ENCODE measurements at regions of chr2 and their contacts with region 1.

Region 1: DNA sequence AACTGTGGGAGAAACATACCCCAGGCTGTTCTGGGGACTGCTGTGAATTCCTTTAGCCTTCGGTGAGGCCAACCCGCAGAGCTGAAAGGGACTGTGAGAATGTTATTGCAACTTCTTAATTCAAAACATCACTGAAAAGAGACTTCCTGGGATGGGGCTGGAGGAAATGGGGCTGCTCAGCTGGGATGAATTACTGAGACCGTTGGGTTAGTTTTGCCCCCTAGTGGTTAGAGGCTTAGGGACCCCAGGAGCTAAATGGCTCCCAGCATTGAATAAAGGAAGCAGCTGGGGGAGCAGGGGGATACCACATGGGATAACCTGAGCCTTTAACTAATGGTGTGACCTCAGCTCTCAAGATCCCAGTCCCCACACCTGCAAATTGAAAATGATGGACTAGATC is 941.1 kb upstream of the FANCL start:
- DNase-seq: peak; percentile 22
- ATAC-seq: peak; percentile 96
- H3K4me3 ChIP-seq: no peak overlapping the region
- H3K27ac ChIP-seq: no peak overlapping the region
- H3K4me1 ChIP-seq: no peaks in the 10 kb centered on the region
- H3K27me3 ChIP-seq: no peaks in the 10 kb centered on the region
- CTCF ChIP-seq: peak; percentile 66
- EP300 ChIP-seq: no peak
- POLR2A ChIP-seq: no peak
- RAD21 ChIP-seq: no peak

Region 2: GRCh38 chr2:57720728-57721627 is 1461.3 kb before region 1 on chr2:
- CTCF ChIA-PET with region 1: no interaction called
- POLR2A ChIA-PET with region 1: no interaction called
- in situ Hi-C with region 1: no loop called
- intact Hi-C with region 1: loop called (anchors 2 kb)
- DNase-seq: peak; percentile 56
- ATAC-seq: peak; percentile 100
- H3K4me3 ChIP-seq: peak overlapping the region in 1 of 3 experiments; percentile 19; a peak in 1 of 6 replicates
- H3K27ac ChIP-seq: no peak overlapping the region
- H3K4me1 ChIP-seq: no peaks in the 10 kb centered on the region
- H3K27me3 ChIP-seq: no peaks in the 10 kb centered on the region
- CTCF ChIP-seq: peak; percentile 85
- EP300 ChIP-seq: no peak
- POLR2A ChIP-seq: no peak
- RAD21 ChIP-seq: peak; percentile 53

Region 3: GRCh38 chr2:58762176-58762781 is 420.0 kb before region 1 on chr2:
- CTCF ChIA-PET with region 1: no interaction called
- POLR2A ChIA-PET with region 1: no interaction called
- in situ Hi-C with region 1: loop called (anchors 10 kb)
- intact Hi-C with region 1: loop called (anchors 1 kb)
- DNase-seq: peak; percentile 35
- ATAC-seq: peak; percentile 93
- H3K4me3 ChIP-seq: no peak overlapping the region
- H3K27ac ChIP-seq: no peak overlapping the region
- H3K4me1 ChIP-seq: no peaks in the 10 kb centered on the region
- H3K27me3 ChIP-seq: no peaks in the 10 kb centered on the region
- CTCF ChIP-seq: peak; percentile 74
- EP300 ChIP-seq: no peak
- POLR2A ChIP-seq: no peak
- RAD21 ChIP-seq: peak; percentile 52; the same call in 1 of the 2 replicates

Region 4: DNA sequence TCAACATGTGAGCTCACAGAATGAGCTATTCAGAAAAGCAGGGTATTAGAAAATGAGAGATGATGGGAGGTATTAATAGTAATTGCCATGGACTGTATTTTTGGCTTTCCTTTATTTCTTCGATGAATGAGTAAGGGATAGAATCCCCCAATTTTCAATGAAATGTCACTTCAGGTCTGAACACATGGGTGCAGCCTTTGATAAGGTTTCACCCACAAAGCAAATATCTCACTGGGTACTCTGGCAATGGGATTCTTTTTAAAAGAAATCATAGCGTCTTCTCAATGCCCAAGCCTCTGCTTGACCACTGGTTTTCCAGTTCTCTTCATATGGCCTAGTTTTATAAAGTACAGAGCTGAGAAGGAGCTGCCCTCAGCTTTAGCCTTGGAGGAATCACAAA is 330.7 kb before region 1 on chr2:
- CTCF ChIA-PET with region 1: no interaction called
- POLR2A ChIA-PET with region 1: no interaction called
- in situ Hi-C with region 1: no loop called
- intact Hi-C with region 1: loop called (anchors 2 kb)
- DNase-seq: no peak
- ATAC-seq: no peak
- H3K4me3 ChIP-seq: no peak overlapping the region
- H3K27ac ChIP-seq: no peak overlapping the region
- H3K4me1 ChIP-seq: no peaks in the 10 kb centered on the region
- H3K27me3 ChIP-seq: no peaks in the 10 kb centered on the region
- CTCF ChIP-seq: peak; percentile 13; the same call in 1 of the 2 replicates
- EP300 ChIP-seq: no peak
- POLR2A ChIP-seq: no peak
- RAD21 ChIP-seq: no peak

Region 5: GRCh38 chr2:59112258-59112657 is 70.0 kb before region 1 on chr2:
- CTCF ChIA-PET with region 1: no interaction called
- POLR2A ChIA-PET with region 1: no interaction called
- in situ Hi-C with region 1: no loop called
- intact Hi-C with region 1: no loop called
- DNase-seq: no peak
- ATAC-seq: no peak
- H3K4me3 ChIP-seq: no peak overlapping the region
- H3K27ac ChIP-seq: no peak overlapping the region
- H3K4me1 ChIP-seq: no peaks in the 10 kb centered on the region
- H3K27me3 ChIP-seq: no peaks in the 10 kb centered on the region
- CTCF ChIP-seq: no peak
- EP300 ChIP-seq: no peak
- POLR2A ChIP-seq: no peak
- RAD21 ChIP-seq: no peak

Measured in HepG2 (cell line).